PC-9 (cell line): ENCODE measurements at regions of chr16 and their contacts with region 1.

Region 1: DNA sequence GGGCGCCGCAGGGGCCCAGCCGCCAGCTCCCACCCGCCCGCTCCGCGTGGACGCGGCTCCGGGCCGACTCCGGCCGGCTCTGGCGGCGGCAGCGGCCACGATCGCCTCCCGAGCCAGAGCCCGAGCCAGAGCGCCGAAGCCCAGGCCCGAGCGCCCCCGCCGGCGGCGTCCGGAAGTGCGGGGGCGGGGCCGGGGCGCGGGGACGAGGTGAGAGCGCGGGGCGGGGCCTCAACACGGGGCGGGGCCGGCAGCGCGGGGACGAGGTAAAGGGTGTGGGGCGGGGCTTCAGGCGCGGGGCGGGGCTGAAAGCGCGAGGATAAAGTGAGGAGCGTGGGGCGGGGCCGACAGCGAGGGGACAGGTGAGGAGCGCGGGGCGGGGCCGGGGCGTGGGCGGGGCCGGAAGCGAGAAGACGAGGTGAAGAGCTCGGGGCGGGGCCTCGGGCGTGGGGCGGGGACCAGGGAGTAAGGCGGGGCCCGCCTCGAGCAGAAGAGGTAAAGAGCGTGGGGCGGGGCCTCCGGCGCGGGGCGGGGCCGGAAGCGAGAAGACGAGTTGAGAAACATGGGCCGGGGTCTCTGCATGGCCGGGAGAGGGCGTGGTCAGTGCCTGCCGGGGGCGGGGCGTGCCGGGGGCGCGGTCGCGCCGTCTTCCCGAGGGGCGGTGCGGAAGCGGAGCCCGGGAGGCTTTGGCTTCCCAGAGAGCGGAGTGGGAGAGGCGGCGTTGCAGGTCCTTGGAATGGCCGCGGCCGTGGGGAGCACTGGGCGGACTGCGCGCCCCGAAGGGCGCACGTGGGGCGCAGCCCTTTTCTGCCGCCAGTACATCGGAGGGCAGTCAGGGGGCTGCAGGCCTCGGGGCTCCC is at the start of gene AXIN1:
- DNase-seq: peak; percentile 89 to 100
- H3K4me3 ChIP-seq: peak within 1 kb of the TSS; percentile 93
- H3K27ac ChIP-seq: no peak within 1 kb of the TSS
- H3K4me1 ChIP-seq: 0 out of 2 replicates have a peak, but pooled peaks cover 5% of the 10 kb centered on the region
- H3K27me3 ChIP-seq: no peaks in the 10 kb centered on the region
- CTCF ChIP-seq: no peak
- total RNA-seq, gene AXIN1: 42.0 and 51.2 TPM in 2 replicates

Region 2: DNA sequence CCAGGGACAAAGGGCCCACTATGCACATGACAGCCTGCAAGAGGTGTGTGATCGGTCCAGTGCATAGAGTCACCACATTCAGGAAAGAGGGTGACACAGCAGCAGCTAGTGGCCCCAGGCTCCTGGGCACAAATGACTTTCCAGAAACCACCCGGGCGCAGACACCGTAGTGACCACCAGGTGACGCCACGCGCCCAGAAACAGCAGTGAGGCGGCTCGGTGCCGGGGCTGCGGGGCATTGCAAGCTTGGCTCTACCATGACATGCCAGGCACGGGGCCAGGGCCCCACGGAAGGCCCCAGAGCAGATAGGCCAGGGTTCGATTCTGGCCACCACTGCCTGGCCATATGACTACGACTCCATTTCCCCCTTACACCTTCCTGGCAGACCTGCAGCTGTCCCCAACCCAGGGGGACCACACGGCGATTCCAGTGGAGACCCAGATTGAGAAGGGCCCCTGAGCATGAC is 287.1 kb before region 1 on chr16:
- CTCF ChIA-PET with region 1: interaction called, 13 read pairs
- POLR2A ChIA-PET with region 1: interaction called, 11 read pairs
- intact Hi-C with region 1: no loop called
- DNase-seq: peak; percentile 52 to 89
- H3K4me3 ChIP-seq: no peak overlapping the region
- H3K27ac ChIP-seq: no peak overlapping the region
- H3K4me1 ChIP-seq: peaks cover 10% of the 10 kb centered on the region
- H3K27me3 ChIP-seq: no peaks in the 10 kb centered on the region
- CTCF ChIP-seq: peak; percentile 92

Region 3: GRCh38 chr16:200388-200787 is 152.4 kb before region 1 on chr16:
- CTCF ChIA-PET with region 1: interaction called, 14 read pairs
- POLR2A ChIA-PET with region 1: no interaction called
- intact Hi-C with region 1: no loop called
- DNase-seq: no peak
- H3K4me3 ChIP-seq: no peak overlapping the region
- H3K27ac ChIP-seq: 0 out of 2 replicates have a peak overlapping the region, but pooled peaks have one; percentile 23
- H3K4me1 ChIP-seq: no peaks in the 10 kb centered on the region
- H3K27me3 ChIP-seq: no peaks in the 10 kb centered on the region
- CTCF ChIP-seq: no peak

Region 4: GRCh38 chr16:228818-229730 is 123.7 kb before region 1 on chr16 and contains the start of gene LUC7L:
- CTCF ChIA-PET with region 1: no interaction called
- POLR2A ChIA-PET with region 1: interaction called, 30 read pairs
- intact Hi-C with region 1: loop called (anchors 2 kb)
- DNase-seq: peak; percentile 69 to 91
- H3K4me3 ChIP-seq: peak within 1 kb of the TSS; percentile 93
- H3K27ac ChIP-seq: peak within 1 kb of the TSS; percentile 75
- H3K4me1 ChIP-seq: peaks cover 15% of the 10 kb centered on the region
- H3K27me3 ChIP-seq: no peaks in the 10 kb centered on the region
- CTCF ChIP-seq: no peak
- total RNA-seq, gene LUC7L: 64.3 and 66.9 TPM in 2 replicates

Region 5: DNA sequence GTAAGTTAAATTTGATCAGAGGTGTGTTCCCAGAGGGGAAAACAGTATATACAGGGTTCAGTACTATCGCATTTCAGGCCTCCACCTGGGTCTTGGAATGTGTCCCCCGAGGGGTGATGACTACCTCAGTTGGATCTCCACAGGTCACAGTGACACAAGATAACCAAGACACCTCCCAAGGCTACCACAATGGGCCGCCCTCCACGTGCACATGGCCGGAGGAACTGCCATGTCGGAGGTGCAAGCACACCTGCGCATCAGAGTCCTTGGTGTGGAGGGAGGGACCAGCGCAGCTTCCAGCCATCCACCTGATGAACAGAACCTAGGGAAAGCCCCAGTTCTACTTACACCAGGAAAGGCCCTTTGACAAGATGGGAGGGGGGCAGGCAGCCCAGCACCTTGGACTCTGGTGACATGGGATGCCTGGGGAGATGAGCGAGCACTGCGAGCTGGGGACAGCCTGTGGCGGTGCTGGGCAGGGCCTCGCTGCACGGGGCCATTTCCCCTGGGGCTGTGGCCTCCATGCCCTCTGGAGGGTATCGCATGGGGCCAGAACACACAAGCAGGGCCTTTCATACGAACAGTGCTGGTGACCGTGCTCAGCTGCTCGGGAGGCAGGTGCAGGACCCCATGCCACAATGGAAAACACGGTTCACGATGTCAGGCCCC is 35.8 kb before region 1 on chr16:
- CTCF ChIA-PET with region 1: no interaction called
- POLR2A ChIA-PET with region 1: interaction called, 4 read pairs
- intact Hi-C with region 1: loop called (anchors 1 kb)
- DNase-seq: peak; percentile 72 to 83
- H3K4me3 ChIP-seq: no peak overlapping the region
- H3K27ac ChIP-seq: no peak overlapping the region
- H3K4me1 ChIP-seq: peaks cover 13% of the 10 kb centered on the region
- H3K27me3 ChIP-seq: no peaks in the 10 kb centered on the region
- CTCF ChIP-seq: no peak

Region 6: GRCh38 chr16:370443-370842 is 17.7 kb after region 1 on chr16 and contains the start of gene MRPL28:
- CTCF ChIA-PET with region 1: no interaction called
- POLR2A ChIA-PET with region 1: interaction called, 19 read pairs
- intact Hi-C with region 1: no loop called
- DNase-seq: peak; percentile 86 to 96
- H3K4me3 ChIP-seq: peak within 1 kb of the TSS; percentile 38; the same call in 1 of the 2 replicates
- H3K27ac ChIP-seq: no peak within 1 kb of the TSS
- H3K4me1 ChIP-seq: peaks cover 5% of the 10 kb centered on the region; the same call in 1 of the 2 replicates
- H3K27me3 ChIP-seq: no peaks in the 10 kb centered on the region
- CTCF ChIP-seq: no peak
- total RNA-seq, gene MRPL28: 130 and 150 TPM in 2 replicates